ENCODE measurements at regions of chr3 and their contacts with region 1.

Region 1: DNA sequence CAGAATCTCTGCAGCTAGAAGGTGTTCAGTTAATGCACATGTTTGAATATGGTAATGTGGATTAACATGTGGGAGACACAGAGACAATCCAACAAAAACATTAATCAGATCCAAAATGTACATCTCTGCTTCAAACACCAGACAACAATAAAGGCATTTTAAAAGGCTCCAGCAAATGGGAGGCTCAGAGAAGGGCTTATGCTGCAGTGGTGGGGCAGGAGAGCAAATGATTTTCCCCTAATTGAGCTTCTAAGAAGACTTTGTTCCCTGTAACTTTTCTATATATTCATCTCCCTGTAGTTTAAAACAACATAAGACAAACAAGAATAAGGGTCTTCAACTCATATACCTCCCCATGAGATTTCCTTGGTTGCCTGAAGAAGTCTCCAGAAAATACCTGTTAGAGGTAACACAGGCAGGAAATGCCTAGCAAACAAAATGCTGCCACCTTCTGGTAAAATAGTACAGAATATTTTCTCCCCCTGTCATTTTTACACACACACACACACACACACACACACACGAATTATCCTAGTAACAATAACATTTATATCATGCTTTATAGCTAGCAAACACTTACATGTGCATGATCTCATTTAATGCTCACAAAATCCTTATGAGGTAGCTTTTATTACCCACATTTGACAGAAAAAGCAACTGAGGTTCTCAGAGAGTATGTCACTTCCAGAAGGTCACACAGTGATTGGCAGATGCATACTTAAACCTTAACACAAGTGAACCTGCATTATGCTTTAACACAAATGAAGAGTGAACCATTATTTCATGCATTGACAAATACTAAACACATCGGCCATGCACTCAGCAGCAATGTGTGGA is 123.4 kb upstream of the MB21D2 start:
- H3K4me3 ChIP-seq: no peak overlapping the region
- H3K27ac ChIP-seq: no peak overlapping the region
- H3K4me1 ChIP-seq: no peaks in the 10 kb centered on the region
- CTCF ChIP-seq: no peak

Region 2: GRCh38 chr3:192816351-192816750 is 224.7 kb before region 1 on chr3:
- CTCF ChIA-PET with region 1: interaction called, 132 read pairs
- POLR2A ChIA-PET with region 1: no interaction called
- H3K4me3 ChIP-seq: no peak overlapping the region
- H3K27ac ChIP-seq: no peak overlapping the region
- H3K4me1 ChIP-seq: peaks cover 16% of the 10 kb centered on the region
- CTCF ChIP-seq: no peak

Region 3: DNA sequence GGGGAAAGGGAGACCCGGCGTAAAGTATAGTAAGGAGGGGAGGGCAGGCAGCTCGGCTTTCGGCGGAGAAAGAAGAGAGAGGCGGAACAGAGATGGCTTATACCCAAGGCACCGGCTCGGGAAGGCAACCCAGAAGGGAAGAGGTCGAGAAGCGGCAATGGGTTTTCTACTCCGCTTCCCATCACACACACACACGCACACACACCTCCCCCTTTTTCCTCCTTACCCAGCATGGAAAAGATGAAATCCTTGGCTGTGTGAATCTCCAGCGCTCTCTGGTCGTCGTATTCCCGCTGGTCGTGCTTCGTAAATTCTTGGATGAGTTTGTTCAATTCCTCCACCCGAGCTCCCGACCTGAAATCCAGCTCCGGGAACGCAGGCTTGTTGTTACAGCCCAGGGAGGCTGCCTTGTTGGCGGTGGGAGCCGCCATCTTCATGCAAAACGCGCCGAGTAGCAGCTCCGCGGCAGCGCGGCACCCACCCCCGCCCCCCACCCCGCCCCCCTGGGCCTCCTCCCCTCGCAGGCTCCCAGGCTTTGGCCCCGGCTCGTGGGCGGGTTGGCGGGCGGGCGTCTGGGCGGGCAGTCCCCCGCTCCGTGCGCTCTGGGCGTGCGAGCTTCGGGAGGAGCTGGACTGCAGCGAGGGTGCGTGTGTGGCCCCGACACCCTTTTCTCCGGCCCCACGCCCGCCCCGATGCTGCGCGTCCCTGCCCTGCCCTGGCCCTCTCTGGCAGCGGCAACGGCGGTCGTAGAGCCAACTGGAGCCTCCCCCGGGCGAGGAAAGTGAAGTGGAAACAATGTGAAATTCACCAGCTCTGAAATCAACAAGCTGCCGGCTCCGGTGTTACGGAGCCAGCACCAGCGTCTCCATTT is 123.4 kb before region 1 on chr3 and contains the start of gene MB21D2:
- CTCF ChIA-PET with region 1: interaction called, 11 read pairs
- POLR2A ChIA-PET with region 1: interaction called, 5 read pairs
- H3K4me3 ChIP-seq: peak within 1 kb of the TSS; percentile 84
- H3K27ac ChIP-seq: peak within 1 kb of the TSS; percentile 96
- H3K4me1 ChIP-seq: 0 out of 2 replicates have a peak, but pooled peaks cover 4% of the 10 kb centered on the region
- CTCF ChIP-seq: no peak

Region 4: GRCh38 chr3:193030276-193030675 is 10.8 kb before region 1 on chr3:
- CTCF ChIA-PET with region 1: interaction called, 11 read pairs
- POLR2A ChIA-PET with region 1: no interaction called
- H3K4me3 ChIP-seq: no peak overlapping the region
- H3K27ac ChIP-seq: no peak overlapping the region
- H3K4me1 ChIP-seq: 0 out of 2 replicates have a peak, but pooled peaks cover 3% of the 10 kb centered on the region
- CTCF ChIP-seq: no peak

Region 5: GRCh38 chr3:193052354-193053045 is 11.4 kb after region 1 on chr3:
- CTCF ChIA-PET with region 1: interaction called, 16 read pairs
- POLR2A ChIA-PET with region 1: no interaction called
- H3K4me3 ChIP-seq: no peak overlapping the region
- H3K27ac ChIP-seq: no peak overlapping the region
- H3K4me1 ChIP-seq: peaks cover 5% of the 10 kb centered on the region; the same call in 1 of the 2 replicates
- CTCF ChIP-seq: no peak